H1 (cell line): ENCODE measurements at regions of chr1 and their contacts with region 1.

Region 1: GRCh38 chr1:112674439-112674985 is at the start of gene MOV10:
- DNase-seq: peak; percentile 58 to 85
- H3K4me3 ChIP-seq: peak within 1 kb of the TSS; percentile 85 to 92 (median 90)
- H3K27ac ChIP-seq: peak within 1 kb of the TSS; percentile 74
- H3K4me1 ChIP-seq: peaks cover 2 to 14% (median 10%) of the 10 kb centered on the region in 4 experiments; a peak in 5 of 7 replicates
- H3K27me3 ChIP-seq: peaks cover 0 to 2% (median 0%) of the 10 kb centered on the region in 4 experiments; a peak in 2 of 7 replicates
- CTCF ChIP-seq: no peak
- EP300 ChIP-seq: peak in 1 of 2 experiments; percentile 36; a peak in 1 of 3 replicates
- POLR2A ChIP-seq: peak in 1 of 2 experiments; percentile 86; a peak in 2 of 3 replicates
- RAD21 ChIP-seq: peak in 1 of 2 experiments; percentile 14; a peak in 1 of 4 replicates
- total RNA-seq, gene MOV10: 105 and 109 TPM in 2 replicates

Region 2: DNA sequence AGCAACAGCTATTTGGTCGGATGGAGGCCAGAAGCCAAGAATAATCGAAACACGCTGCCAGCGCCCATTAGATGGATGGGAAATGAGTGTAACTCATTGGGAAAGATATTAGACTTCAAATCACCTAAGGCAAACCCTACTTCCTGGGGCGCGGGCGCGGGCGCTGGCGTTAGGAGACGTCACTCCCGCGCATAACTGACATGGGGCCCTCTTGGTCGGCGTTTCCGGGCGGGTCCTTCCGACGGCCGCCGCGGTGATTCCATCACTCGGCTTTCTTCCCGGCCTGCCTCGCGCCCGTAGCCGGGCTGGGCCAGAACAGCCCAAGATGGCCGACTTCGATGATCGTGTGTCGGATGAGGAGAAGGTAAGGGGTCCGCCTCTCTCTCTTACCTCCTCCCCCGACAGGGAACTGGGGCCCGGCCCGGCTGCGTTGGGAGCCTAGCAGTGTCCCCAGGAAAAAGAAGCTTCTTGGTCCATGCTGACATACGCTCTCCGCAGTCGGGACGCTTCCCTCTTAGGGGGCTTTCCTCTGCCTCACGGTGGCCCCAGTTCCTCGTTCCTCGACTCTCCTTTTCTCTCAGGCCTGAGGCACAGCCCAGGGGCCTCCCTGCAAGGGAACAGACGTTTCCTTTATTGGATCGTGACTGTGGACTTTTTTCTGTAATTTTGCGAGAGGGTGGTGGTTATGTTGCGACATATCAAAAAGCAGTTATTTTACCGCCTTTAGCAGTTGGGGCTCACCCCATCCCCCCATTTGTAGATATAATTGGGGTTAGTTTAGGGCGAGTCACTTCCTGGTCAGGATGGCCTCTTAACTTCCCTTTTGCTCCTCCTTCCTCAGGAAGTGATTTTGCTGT is 54.8 kb before region 1 on chr1 and contains the start of gene CAPZA1:
- CTCF ChIA-PET with region 1: interaction called, 13 read pairs
- POLR2A ChIA-PET with region 1: interaction called, 34 read pairs
- DNase-seq: peak; percentile 61 to 87
- H3K4me3 ChIP-seq: peak within 1 kb of the TSS; percentile 84 to 98 (median 96)
- H3K27ac ChIP-seq: peak within 1 kb of the TSS; percentile 96
- H3K4me1 ChIP-seq: peaks cover 0 to 5% (median 0%) of the 10 kb centered on the region in 4 experiments; a peak in 2 of 7 replicates
- H3K27me3 ChIP-seq: no peaks in the 10 kb centered on the region
- CTCF ChIP-seq: no peak
- EP300 ChIP-seq: peak in 1 of 2 experiments; percentile 71; a peak in 1 of 3 replicates
- POLR2A ChIP-seq: peak; percentile 87 to 96
- RAD21 ChIP-seq: no peak; a peak in 1 of 4 replicates
- total RNA-seq, gene CAPZA1: 107 and 114 TPM in 2 replicates

Region 3: GRCh38 chr1:112651205-112651604 is 23.3 kb before region 1 on chr1:
- CTCF ChIA-PET with region 1: interaction called, 16 read pairs
- POLR2A ChIA-PET with region 1: interaction called, 5 read pairs
- DNase-seq: no peak
- H3K4me3 ChIP-seq: no peak overlapping the region
- H3K27ac ChIP-seq: no peak overlapping the region
- H3K4me1 ChIP-seq: no peaks in the 10 kb centered on the region
- H3K27me3 ChIP-seq: no peaks in the 10 kb centered on the region
- CTCF ChIP-seq: no peak
- EP300 ChIP-seq: no peak
- POLR2A ChIP-seq: no peak
- RAD21 ChIP-seq: no peak

Region 4: DNA sequence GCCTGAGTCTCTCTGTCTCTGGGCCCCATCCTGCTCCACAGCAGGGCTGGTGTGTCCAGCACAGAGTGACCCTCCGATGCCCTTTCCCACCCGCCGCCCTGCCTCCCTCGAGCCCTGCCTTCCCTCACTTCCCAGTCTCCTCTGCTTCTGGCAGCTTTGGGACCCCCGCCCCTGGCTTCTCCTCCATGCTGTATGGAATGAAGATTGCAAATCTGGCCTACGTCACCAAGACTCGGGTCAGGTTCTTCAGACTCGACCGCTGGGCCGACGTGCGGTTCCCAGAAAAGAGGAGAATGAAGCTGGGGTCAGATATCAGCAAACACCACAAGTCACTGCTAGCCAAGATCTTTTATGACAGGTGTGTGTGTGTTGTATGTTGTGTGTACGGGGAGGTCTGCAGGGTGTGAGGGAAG is 14.3 kb after region 1 on chr1:
- CTCF ChIA-PET with region 1: interaction called, 10 read pairs
- POLR2A ChIA-PET with region 1: interaction called, 26 read pairs
- DNase-seq: no peak
- H3K4me3 ChIP-seq: no peak overlapping the region
- H3K27ac ChIP-seq: no peak overlapping the region
- H3K4me1 ChIP-seq: peaks cover 0 to 2% (median 0%) of the 10 kb centered on the region in 4 experiments; a peak in 2 of 7 replicates
- H3K27me3 ChIP-seq: no peaks in the 10 kb centered on the region
- CTCF ChIP-seq: no peak
- EP300 ChIP-seq: no peak
- POLR2A ChIP-seq: no peak
- RAD21 ChIP-seq: no peak

Region 5: DNA sequence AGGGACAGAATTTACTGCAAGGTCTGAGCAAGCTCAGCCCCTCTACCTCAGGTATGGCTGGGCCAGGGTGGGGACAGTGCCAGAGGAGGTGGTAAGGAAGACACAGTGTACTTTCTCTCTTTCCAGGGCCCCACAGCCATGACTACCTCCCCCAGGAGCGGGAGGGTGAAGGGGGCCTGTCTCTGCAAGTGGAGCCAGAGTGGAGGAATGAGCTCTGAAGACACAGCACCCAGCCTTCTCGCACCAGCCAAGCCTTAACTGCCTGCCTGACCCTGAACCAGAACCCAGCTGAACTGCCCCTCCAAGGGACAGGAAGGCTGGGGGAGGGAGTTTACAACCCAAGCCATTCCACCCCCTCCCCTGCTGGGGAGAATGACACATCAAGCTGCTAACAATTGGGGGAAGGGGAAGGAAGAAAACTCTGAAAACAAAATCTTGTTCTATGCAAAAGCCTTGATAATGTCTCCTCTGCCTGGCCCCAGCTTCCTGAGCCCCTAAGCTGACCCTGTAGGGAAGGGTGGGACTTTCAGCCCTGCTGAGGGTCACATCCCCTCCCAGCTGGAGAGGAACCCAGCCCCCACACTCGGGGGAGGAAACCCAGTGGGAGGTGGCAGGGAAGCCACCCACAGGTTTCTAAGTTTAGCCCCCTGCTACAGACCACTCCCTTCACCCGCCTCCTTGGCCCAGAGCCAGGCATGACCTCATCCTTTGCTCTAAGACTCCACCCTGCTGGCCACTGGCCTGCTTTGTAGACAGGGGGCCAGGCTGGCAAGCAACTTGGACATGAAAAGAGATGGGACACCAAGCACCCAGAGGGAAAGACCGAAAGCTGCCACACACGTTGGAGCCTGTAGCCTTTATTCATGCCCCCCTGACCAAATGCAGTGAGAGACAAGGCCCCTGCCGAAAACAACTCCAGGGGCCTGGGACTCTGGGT is 26.0 kb after region 1 on chr1:
- CTCF ChIA-PET with region 1: interaction called, 63 read pairs
- POLR2A ChIA-PET with region 1: interaction called, 76 read pairs
- DNase-seq: peak; percentile 81 to 83
- H3K4me3 ChIP-seq: peak overlapping the region in 1 of 4 experiments; percentile 10; a peak in 2 of 8 replicates
- H3K27ac ChIP-seq: no peak overlapping the region
- H3K4me1 ChIP-seq: peaks cover 8 to 51% (median 28%) of the 10 kb centered on the region in 4 experiments
- H3K27me3 ChIP-seq: peaks cover 0 to 9% (median 2%) of the 10 kb centered on the region in 4 experiments; a peak in 2 of 7 replicates
- CTCF ChIP-seq: no peak
- EP300 ChIP-seq: no peak
- POLR2A ChIP-seq: no peak; a peak in 1 of 3 replicates
- RAD21 ChIP-seq: no peak; a peak in 1 of 4 replicates

Region 6: DNA sequence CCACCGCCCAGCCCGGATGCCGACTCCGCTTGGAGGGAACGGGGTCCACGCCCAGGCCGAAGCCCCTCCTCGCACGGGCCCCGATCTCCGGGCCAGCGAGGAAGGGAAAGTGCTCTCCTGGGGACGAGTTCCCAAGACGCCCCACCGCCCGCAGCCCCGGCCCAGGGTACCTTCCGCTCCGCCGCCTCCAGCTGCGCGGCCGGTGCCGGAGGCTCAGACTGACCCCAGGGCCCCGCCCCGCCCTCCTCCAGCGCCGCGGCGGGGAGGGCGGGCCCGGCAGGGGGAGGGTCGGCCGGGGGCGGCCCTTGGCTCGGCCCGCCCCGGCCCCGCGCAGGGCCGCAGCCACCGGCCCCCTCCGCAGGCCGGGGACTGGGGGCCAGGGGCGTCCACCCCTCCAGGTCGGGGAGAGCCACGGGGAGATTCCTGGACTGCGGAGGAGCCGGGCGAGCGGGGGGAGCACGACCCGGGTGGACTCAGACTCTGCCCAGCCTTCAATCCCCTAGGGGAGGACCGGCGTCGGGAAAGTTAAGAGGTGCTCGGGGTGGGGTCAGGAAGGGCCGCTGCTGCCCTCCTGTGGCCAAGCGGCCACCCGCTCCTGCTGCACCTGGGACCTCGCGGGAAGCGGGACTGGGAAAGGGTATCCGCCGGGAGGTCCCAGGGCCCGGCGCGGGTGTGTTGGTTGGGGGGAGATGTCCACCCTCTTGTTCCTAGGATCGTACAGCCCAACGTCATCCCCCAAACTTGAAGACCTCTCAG is 32.6 kb after region 1 on chr1 and contains the start of gene RHOC:
- CTCF ChIA-PET with region 1: interaction called, 63 read pairs
- POLR2A ChIA-PET with region 1: interaction called, 71 read pairs
- DNase-seq: peak; percentile 74 to 94
- H3K4me3 ChIP-seq: peak within 1 kb of the TSS; percentile 39 to 78 (median 66)
- H3K27ac ChIP-seq: no peak within 1 kb of the TSS
- H3K4me1 ChIP-seq: peaks cover 10 to 37% (median 20%) of the 10 kb centered on the region in 4 experiments
- H3K27me3 ChIP-seq: peaks cover 0 to 10% (median 4%) of the 10 kb centered on the region in 4 experiments; a peak in 2 of 7 replicates
- CTCF ChIP-seq: peak in 2 of 3 experiments; percentile 90 to 92; a peak in 3 of 4 replicates
- EP300 ChIP-seq: peak in 1 of 2 experiments; percentile 45; a peak in 1 of 3 replicates
- POLR2A ChIP-seq: peak in 1 of 2 experiments; percentile 42; a peak in 1 of 3 replicates
- RAD21 ChIP-seq: peak; percentile 87 to 91
- total RNA-seq, gene RHOC: 53.6 and 57.6 TPM in 2 replicates